Naive thymus-derived CD4-positive, alpha-beta T cell (primary cell): ENCODE measurements at regions of chr12 and their contacts with region 1.

Region 1: GRCh38 chr12:98490501-98491453 is 24.6 kb upstream of the TMPO start:
- DNase-seq: peak; percentile 69 to 86 (median 78)
- ATAC-seq: peak; percentile 99
- H3K4me3 ChIP-seq: no peak overlapping the region
- H3K4me3 Mint-ChIP-seq: peak overlapping the region; percentile 21 to 67 (median 54)
- H3K27ac ChIP-seq: peak overlapping the region; percentile 58
- H3K27ac Mint-ChIP-seq: peak overlapping the region; percentile 71 to 98 (median 92)
- H3K4me1 ChIP-seq: peaks cover 0 to 7% of the 10 kb centered on the region in 2 donors
- H3K4me1 Mint-ChIP-seq: peaks cover 0 to 7% (median 6%) of the 10 kb centered on the region in 7 donors
- H3K27me3 ChIP-seq: no peaks in the 10 kb centered on the region
- H3K27me3 Mint-ChIP-seq: peaks cover 0 to 10% (median 0%) of the 10 kb centered on the region in 5 donors

Region 2: DNA sequence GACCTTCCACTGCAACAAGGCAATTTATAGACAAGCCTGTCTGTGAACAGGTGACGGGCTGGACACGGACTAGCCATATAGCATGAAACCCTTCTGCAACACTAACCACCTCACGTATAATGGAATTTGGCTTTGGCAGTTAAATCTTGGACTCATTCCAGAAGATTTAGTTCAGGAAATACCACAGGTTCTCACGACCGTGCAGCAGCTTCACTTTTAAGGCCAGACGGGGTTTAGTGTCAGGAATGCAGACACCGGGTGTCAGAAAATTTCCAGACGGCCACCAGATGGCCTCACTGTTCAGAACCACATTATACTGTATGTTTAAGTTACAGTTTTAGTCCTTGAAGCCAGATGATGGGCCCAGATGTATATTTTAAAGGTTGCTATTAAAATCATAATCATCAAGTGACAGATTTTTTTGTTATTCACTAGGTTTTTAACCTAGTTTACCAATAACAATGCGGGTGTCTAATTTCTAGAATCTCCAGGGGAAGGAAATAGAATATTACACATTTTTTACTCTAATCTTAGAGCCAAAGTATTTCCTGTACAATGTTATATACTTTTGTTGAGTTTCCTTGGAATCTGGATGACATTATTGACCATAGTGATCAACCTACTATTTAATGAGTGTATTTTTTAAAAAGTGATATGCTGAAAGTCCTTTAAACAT is 65.9 kb before region 1 on chr12:
- CTCF ChIA-PET with region 1: interaction called, 4 read pairs
- POLR2A ChIA-PET with region 1: no interaction called
- intact Hi-C with region 1: loop called (anchors 1 kb)
- DNase-seq: peak; percentile 13 to 52 (median 44)
- ATAC-seq: peak; percentile 83
- H3K4me3 ChIP-seq: no peak overlapping the region
- H3K4me3 Mint-ChIP-seq: no peak overlapping the region
- H3K27ac ChIP-seq: no peak overlapping the region
- H3K27ac Mint-ChIP-seq: no peak overlapping the region
- H3K4me1 ChIP-seq: no peaks in the 10 kb centered on the region
- H3K4me1 Mint-ChIP-seq: peaks cover 0 to 6% (median 5%) of the 10 kb centered on the region in 7 donors
- H3K27me3 ChIP-seq: no peaks in the 10 kb centered on the region
- H3K27me3 Mint-ChIP-seq: peaks cover 0 to 9% (median 0%) of the 10 kb centered on the region in 5 donors

Region 3: GRCh38 chr12:98503592-98504367 is 13.0 kb after region 1 on chr12:
- CTCF ChIA-PET with region 1: interaction called, 10 read pairs
- POLR2A ChIA-PET with region 1: interaction called, 11 read pairs
- intact Hi-C with region 1: loop called (anchors 1 kb)
- DNase-seq: peak; percentile 89 to 95 (median 92)
- ATAC-seq: peak; percentile 94
- H3K4me3 ChIP-seq: peak overlapping the region; percentile 97
- H3K4me3 Mint-ChIP-seq: peak overlapping the region; percentile 89 to 99 (median 94)
- H3K27ac ChIP-seq: peak overlapping the region; percentile 90
- H3K27ac Mint-ChIP-seq: peak overlapping the region; percentile 95 to 100 (median 100)
- H3K4me1 ChIP-seq: peaks cover 0 to 11% of the 10 kb centered on the region in 2 donors
- H3K4me1 Mint-ChIP-seq: peaks cover 6 to 30% (median 23%) of the 10 kb centered on the region in 7 donors
- H3K27me3 ChIP-seq: no peaks in the 10 kb centered on the region
- H3K27me3 Mint-ChIP-seq: peaks cover 0 to 18% (median 3%) of the 10 kb centered on the region in 5 donors

Region 4: DNA sequence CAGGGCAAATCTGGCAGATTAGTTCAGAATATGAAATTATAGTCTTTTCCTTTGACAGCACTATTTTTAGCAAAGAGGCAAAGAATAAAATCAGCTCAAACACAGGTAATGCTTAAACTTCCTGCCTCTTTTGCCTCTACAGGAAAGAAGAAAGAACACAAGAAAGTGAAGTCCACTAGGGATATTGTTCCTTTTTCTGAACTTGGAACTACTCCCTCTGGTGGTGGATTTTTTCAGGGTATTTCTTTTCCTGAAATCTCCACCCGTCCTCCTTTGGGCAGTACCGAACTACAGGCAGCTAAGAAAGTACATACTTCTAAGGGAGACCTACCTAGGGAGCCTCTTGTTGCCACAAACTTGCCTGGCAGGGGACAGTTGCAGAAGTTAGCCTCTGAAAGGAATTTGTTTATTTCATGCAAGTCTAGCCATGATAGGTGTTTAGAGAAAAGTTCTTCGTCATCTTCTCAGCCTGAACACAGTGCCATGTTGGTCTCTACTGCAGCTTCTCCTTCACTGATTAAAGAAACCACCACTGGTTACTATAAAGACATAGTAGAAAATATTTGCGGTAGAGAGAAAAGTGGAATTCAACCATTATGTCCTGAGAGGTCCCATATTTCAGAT is 42.0 kb after region 1 on chr12:
- CTCF ChIA-PET with region 1: interaction called, 12 read pairs
- POLR2A ChIA-PET with region 1: interaction called, 3 read pairs
- intact Hi-C with region 1: loop called (anchors 1 kb)
- DNase-seq: peak in 7 of 9 donors; percentile 11 to 40 (median 32)
- ATAC-seq: peak; percentile 68
- H3K4me3 ChIP-seq: no peak overlapping the region
- H3K4me3 Mint-ChIP-seq: no peak overlapping the region
- H3K27ac ChIP-seq: no peak overlapping the region
- H3K27ac Mint-ChIP-seq: peak overlapping the region in 2 of 9 donors; percentile 22 to 30
- H3K4me1 ChIP-seq: no peaks in the 10 kb centered on the region
- H3K4me1 Mint-ChIP-seq: peaks cover 4 to 38% (median 17%) of the 10 kb centered on the region in 7 donors
- H3K27me3 ChIP-seq: no peaks in the 10 kb centered on the region
- H3K27me3 Mint-ChIP-seq: no peaks in the 10 kb centered on the region

Region 5: DNA sequence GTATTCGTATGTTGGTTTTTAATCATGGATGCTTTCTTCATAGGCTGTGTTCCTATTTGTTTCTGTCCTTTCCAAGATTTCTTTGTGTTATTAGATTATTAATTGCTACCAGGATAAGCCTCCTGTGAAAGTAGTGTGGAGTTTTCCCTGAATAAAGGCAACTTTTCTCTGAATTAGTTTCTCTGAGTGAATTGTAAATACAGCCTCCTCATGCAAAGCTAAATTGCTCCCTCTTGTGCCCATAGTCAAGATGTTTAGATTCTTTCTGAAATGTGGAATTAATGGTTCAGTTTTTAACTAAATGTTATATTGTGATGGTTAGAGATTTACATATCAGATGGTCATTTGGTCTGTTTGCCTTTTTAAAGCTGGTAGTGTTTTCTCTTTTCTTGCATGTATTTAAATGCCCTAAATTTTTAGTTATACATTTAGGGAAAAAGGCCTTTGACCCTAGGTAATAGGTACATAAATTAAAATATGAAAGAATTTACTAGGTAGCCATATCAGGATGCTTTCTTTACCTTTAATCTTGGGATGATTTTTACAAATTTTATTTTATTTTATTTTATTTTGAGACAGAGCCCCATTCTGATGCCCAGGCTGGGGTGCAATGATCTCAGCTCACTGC is 163.2 kb after region 1 on chr12:
- CTCF ChIA-PET with region 1: interaction called, 4 read pairs
- POLR2A ChIA-PET with region 1: no interaction called
- intact Hi-C with region 1: loop called (anchors 1 kb)
- DNase-seq: peak in 7 of 9 donors; percentile 32 to 69 (median 51)
- ATAC-seq: peak; percentile 64
- H3K4me3 ChIP-seq: no peak overlapping the region
- H3K4me3 Mint-ChIP-seq: no peak overlapping the region
- H3K27ac ChIP-seq: no peak overlapping the region
- H3K27ac Mint-ChIP-seq: peak overlapping the region in 1 of 9 donors; percentile 70
- H3K4me1 ChIP-seq: no peaks in the 10 kb centered on the region
- H3K4me1 Mint-ChIP-seq: peaks cover 4 to 18% (median 12%) of the 10 kb centered on the region in 7 donors
- H3K27me3 ChIP-seq: no peaks in the 10 kb centered on the region
- H3K27me3 Mint-ChIP-seq: no peaks in the 10 kb centered on the region